ENCODE measurements at regions of chr7 and their contacts with region 1.

Region 1: DNA sequence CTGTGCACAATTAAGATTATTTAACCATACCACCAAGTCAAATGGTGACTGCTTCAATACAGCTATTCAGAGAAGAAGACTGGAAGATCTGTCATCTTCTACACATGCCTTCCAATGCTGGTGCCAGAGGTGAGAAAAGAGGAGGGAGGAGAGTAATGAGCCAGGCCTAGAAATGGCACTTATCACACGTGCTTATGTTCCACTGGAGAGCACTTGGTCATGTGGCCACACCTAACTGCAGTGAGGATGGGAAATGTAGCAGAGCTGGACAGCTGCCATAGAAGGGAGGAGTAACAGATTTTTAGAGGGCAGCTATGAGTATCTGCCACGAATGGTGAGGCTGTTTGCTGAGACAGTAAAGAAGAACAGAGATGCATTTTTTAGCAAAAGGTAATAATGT is 77.1 kb downstream of the MPLKIP start:
- DNase-seq: no peak
- ATAC-seq: no peak
- H3K4me3 Mint-ChIP-seq: no peak overlapping the region
- H3K27ac Mint-ChIP-seq: no peak overlapping the region
- H3K4me1 Mint-ChIP-seq: 0 out of 2 replicates have a peak, but pooled peaks cover 3% of the 10 kb centered on the region
- H3K27me3 Mint-ChIP-seq: no peaks in the 10 kb centered on the region
- CTCF ChIP-seq: no peak

Region 2: DNA sequence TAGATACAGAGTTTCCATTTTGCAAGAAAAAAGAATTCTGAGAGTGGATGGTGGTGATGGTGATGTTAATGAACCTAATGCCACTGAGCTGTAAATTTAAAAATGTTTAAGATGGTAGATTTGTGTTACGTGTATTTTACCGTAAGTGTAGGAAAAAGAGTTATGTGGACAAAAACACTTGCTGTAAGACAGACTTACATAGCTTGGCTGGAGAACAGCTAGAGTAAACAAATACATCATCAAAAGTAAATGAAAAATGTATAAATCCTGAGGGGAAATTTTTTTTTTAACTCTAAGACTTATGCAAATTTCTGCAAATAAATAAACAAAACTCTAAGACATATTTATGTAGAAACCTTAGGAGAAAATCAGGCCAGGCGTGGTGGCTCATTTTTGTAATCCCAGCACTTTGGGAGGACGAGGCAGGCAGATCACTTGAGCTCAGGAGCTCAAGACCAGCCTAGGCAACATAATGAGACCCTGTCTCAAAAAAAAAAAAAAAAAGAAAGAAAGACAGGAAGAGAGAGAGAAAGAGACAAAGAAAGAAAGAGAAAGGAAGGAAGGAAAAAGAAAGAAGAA is 173.4 kb before region 1 on chr7:
- CTCF ChIA-PET with region 1: interaction called, 12 read pairs
- POLR2A ChIA-PET with region 1: no interaction called
- DNase-seq: no peak
- ATAC-seq: no peak
- H3K4me3 Mint-ChIP-seq: no peak overlapping the region
- H3K27ac Mint-ChIP-seq: no peak overlapping the region; the same call in 1 of the 2 replicates
- H3K4me1 Mint-ChIP-seq: peaks cover 7% of the 10 kb centered on the region
- H3K27me3 Mint-ChIP-seq: no peaks in the 10 kb centered on the region
- CTCF ChIP-seq: no peak

Region 3: GRCh38 chr7:39894904-39895303 is 162.4 kb before region 1 on chr7:
- CTCF ChIA-PET with region 1: interaction called, 77 read pairs
- POLR2A ChIA-PET with region 1: no interaction called
- DNase-seq: no peak
- ATAC-seq: no peak
- H3K4me3 Mint-ChIP-seq: no peak overlapping the region
- H3K27ac Mint-ChIP-seq: no peak overlapping the region
- H3K4me1 Mint-ChIP-seq: peaks cover 7% of the 10 kb centered on the region; the same call in 1 of the 2 replicates
- H3K27me3 Mint-ChIP-seq: no peaks in the 10 kb centered on the region
- CTCF ChIP-seq: no peak

Region 4: GRCh38 chr7:39948956-39949928 is 108.0 kb before region 1 on chr7:
- CTCF ChIA-PET with region 1: interaction called, 17 read pairs
- POLR2A ChIA-PET with region 1: no interaction called
- DNase-seq: peak; percentile 98
- ATAC-seq: peak; percentile 86
- H3K4me3 Mint-ChIP-seq: peak overlapping the region; percentile 98
- H3K27ac Mint-ChIP-seq: peak overlapping the region; percentile 100
- H3K4me1 Mint-ChIP-seq: peaks cover 20% of the 10 kb centered on the region
- H3K27me3 Mint-ChIP-seq: no peaks in the 10 kb centered on the region
- CTCF ChIP-seq: no peak

Region 5: GRCh38 chr7:39958038-39958437 is 99.3 kb before region 1 on chr7:
- CTCF ChIA-PET with region 1: interaction called, 12 read pairs
- POLR2A ChIA-PET with region 1: interaction called, 4 read pairs
- DNase-seq: no peak
- ATAC-seq: no peak
- H3K4me3 Mint-ChIP-seq: no peak overlapping the region
- H3K27ac Mint-ChIP-seq: no peak overlapping the region
- H3K4me1 Mint-ChIP-seq: peaks cover 51% of the 10 kb centered on the region
- H3K27me3 Mint-ChIP-seq: no peaks in the 10 kb centered on the region
- CTCF ChIP-seq: no peak

Region 6: GRCh38 chr7:40041456-40041855 is 15.8 kb before region 1 on chr7:
- CTCF ChIA-PET with region 1: interaction called, 11 read pairs
- POLR2A ChIA-PET with region 1: no interaction called
- DNase-seq: no peak
- ATAC-seq: no peak
- H3K4me3 Mint-ChIP-seq: no peak overlapping the region
- H3K27ac Mint-ChIP-seq: no peak overlapping the region
- H3K4me1 Mint-ChIP-seq: no peaks in the 10 kb centered on the region
- H3K27me3 Mint-ChIP-seq: no peaks in the 10 kb centered on the region
- CTCF ChIP-seq: no peak